Naive thymus-derived CD4-positive, alpha-beta T cell (primary cell): ENCODE measurements at regions of chr17 and their contacts with region 1.

Region 1: DNA sequence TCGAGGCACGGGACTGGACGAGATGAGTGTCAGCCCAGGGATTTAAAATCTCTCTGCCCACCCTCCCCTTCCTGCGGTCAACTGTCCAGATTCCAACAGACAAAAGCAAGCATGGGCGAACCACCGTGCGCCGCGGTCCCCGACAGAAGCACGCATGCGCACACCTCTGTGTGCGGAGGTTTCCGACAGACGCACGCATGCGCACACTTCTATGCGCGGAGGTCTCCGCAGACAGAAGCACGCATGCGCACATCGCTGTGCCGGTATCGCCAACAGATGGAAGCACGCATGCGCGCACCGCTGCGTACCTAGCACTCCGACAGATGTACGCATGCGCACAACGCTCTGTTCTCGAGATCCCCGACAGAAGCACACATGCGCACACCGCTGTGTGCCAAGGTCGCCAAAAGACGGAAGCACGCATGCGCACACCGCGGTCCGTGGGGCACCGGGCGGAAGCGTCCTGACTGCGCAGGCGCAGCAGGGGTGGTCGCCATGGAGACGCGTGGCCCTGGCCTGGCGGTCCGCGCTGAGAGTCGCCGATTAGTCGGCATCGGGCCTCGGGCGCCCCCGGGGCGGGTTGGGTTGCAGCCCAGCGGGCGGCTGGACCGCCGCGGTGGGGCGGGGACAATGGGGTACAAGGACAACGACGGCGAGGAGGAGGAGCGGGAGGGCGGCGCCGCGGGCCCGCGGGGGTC is 57.4 kb upstream of the RPH3AL start:
- DNase-seq: peak; percentile 97 to 100 (median 99)
- ATAC-seq: peak; percentile 62
- H3K4me3 ChIP-seq: peak overlapping the region; percentile 77
- H3K4me3 Mint-ChIP-seq: peak overlapping the region; percentile 91 to 97 (median 94)
- H3K27ac ChIP-seq: peak overlapping the region; percentile 88
- H3K27ac Mint-ChIP-seq: peak overlapping the region; percentile 90 to 99 (median 98)
- H3K4me1 ChIP-seq: peaks cover 36 to 37% of the 10 kb centered on the region in 2 donors
- H3K4me1 Mint-ChIP-seq: peaks cover 53 to 76% (median 72%) of the 10 kb centered on the region in 7 donors
- H3K27me3 ChIP-seq: no peaks in the 10 kb centered on the region
- H3K27me3 Mint-ChIP-seq: peaks cover 0 to 7% (median 0%) of the 10 kb centered on the region in 5 donors

Region 2: DNA sequence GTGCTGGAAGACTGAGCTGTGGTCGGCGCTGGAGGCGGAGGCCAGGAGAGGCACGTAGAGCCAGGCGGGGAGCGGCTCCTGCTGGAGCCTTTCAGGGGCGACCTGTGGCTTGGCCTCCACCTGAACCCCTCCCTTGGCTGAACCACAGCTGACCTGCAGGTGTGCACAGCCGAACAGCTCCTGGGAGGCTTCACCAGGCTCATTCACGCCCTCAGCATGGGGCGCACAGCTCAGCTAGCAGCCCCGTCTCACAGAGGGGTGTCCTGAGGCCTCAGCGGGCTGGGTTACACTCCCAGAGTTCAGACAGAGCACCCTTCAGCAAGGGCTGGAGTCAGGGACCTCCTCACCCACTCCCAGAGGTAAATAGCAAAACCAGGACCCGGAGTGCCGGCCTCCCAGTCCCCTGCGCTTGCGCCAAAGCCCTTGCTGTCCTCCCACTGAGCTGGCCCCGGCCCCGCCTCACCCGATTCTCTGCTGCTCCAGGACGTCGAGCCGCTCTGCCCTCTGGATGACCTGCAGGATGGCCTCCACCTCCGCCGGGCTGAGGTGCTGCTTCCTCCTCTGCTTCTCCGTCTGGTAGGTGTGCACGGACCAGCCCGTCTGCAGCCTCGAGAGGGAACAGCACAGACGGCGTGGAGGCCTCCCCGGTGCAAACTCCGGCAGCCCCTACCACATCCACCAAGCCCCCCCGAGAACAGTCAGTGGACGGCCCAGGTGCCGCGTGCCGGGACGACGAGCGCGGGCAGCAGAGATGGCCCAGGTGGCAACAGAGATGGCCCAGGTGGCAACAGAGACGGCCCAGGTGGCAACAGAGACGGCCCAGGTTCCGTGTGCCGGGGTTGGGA is 89.0 kb before region 1 on chr17:
- CTCF ChIA-PET with region 1: no interaction called
- POLR2A ChIA-PET with region 1: no interaction called
- intact Hi-C with region 1: no loop called
- DNase-seq: no peak
- ATAC-seq: no peak
- H3K4me3 ChIP-seq: no peak overlapping the region
- H3K4me3 Mint-ChIP-seq: no peak overlapping the region
- H3K27ac ChIP-seq: no peak overlapping the region
- H3K27ac Mint-ChIP-seq: no peak overlapping the region
- H3K4me1 ChIP-seq: no peaks in the 10 kb centered on the region
- H3K4me1 Mint-ChIP-seq: peaks cover 0 to 6% (median 0%) of the 10 kb centered on the region in 7 donors
- H3K27me3 ChIP-seq: no peaks in the 10 kb centered on the region
- H3K27me3 Mint-ChIP-seq: no peaks in the 10 kb centered on the region

Region 3: DNA sequence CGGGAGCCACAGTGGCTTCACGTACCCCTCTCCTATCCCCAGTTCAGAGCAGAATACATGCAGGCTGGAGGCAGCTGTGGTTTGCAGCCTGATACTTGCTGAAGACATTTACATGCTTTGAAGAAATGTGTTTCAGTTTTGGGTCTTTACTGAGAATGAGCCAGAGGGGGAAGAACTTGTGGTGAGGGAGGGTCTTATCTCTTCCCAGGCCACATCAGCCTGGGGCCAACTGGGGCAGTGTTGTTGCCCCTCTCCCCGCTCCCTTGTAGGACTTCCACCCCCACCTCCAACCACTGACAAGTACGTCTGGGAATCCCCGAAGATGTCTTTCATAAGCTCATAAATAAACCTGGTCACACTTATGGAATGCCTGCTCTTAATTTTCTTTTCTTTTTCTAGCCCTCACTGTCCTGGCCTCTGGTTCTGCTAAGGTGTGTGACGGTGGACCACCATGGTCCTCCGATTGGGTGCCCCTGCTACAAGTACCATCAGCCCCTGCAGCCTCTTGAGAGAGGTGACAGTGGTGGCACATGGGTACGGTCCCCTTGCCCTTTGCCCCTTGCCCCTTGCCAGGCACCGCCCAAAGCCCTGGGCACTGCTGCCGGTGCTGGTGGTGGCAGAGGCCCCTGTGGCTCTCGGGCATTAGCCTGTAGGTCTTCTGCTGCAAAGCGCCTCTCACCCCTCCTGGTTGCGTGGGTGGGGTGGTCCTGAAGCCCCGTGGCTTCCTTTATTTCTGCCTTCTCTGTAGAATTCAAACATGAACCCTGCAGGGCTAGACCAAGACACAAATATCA is 87.4 kb after region 1 on chr17:
- CTCF ChIA-PET with region 1: interaction called, 18 read pairs
- POLR2A ChIA-PET with region 1: interaction called, 18 read pairs
- intact Hi-C with region 1: loop called in 1 of 2 experiments (anchors 1 kb)
- DNase-seq: peak in 3 of 9 donors; percentile 24 to 42 (median 27)
- ATAC-seq: peak; percentile 12
- H3K4me3 ChIP-seq: no peak overlapping the region
- H3K4me3 Mint-ChIP-seq: peak overlapping the region; percentile 13 to 85 (median 72)
- H3K27ac ChIP-seq: peak overlapping the region; percentile 25
- H3K27ac Mint-ChIP-seq: peak overlapping the region; percentile 67 to 94 (median 82)
- H3K4me1 ChIP-seq: peaks cover 0 to 40% of the 10 kb centered on the region in 2 donors
- H3K4me1 Mint-ChIP-seq: peaks cover 23 to 63% (median 46%) of the 10 kb centered on the region in 7 donors
- H3K27me3 ChIP-seq: no peaks in the 10 kb centered on the region
- H3K27me3 Mint-ChIP-seq: peaks cover 0 to 5% (median 0%) of the 10 kb centered on the region in 5 donors

Region 4: GRCh38 chr17:588519-588918 is 178.5 kb after region 1 on chr17:
- CTCF ChIA-PET with region 1: interaction called, 6 read pairs
- POLR2A ChIA-PET with region 1: no interaction called
- intact Hi-C with region 1: loop called in 1 of 2 experiments (anchors 5 kb)
- DNase-seq: no peak
- ATAC-seq: no peak
- H3K4me3 ChIP-seq: no peak overlapping the region
- H3K4me3 Mint-ChIP-seq: no peak overlapping the region
- H3K27ac ChIP-seq: no peak overlapping the region
- H3K27ac Mint-ChIP-seq: peak overlapping the region in 1 of 9 donors; percentile 21
- H3K4me1 ChIP-seq: no peaks in the 10 kb centered on the region
- H3K4me1 Mint-ChIP-seq: peaks cover 0 to under 1% (median 0%) of the 10 kb centered on the region in 7 donors
- H3K27me3 ChIP-seq: no peaks in the 10 kb centered on the region
- H3K27me3 Mint-ChIP-seq: no peaks in the 10 kb centered on the region

Region 5: DNA sequence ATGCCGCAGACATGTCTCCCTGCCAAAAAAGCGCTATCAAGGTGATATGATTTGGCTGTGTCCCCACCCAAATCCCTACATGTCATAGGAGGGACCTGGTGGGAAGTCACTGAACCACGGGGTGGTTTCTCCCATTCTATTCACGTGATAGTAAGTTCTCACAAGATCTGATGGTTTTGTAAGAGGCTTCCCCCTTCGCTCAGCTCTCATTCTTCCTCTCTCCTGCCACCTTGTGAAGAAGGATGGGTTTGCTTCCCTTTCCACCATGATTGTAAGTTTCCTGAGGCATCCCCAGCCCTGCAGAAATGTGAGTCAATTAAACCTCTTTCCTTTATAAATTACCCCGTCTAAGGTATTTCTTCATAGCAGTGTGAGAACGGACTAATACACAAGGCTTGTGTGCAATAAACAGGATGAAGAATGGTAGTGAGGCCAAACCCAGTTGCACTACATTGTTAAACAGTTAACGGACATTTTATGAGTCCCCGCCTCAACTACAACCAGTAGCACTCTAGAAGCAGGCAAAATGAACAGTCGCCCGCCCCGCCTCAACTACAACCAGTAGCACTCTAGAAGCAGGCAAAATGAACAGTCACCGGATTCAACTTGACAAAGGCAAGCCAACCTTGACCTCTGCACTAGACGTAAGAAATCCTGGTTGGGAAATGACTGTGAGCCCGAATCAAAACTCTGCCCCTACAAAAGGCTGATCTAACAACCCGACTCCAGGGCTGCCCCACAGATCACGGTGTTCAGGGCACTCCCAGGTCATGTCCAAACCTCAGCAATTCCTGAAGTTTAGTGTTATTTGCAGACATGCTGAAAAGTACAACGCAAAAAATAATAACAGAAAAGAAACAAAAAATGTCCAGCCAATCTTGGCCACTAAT is 278.3 kb after region 1 on chr17:
- CTCF ChIA-PET with region 1: interaction called, 15 read pairs
- POLR2A ChIA-PET with region 1: interaction called, 3 read pairs
- intact Hi-C with region 1: loop called (anchors 1 kb)
- DNase-seq: peak in 4 of 9 donors; percentile 6 to 27 (median 20)
- ATAC-seq: no peak
- H3K4me3 ChIP-seq: no peak overlapping the region
- H3K4me3 Mint-ChIP-seq: no peak overlapping the region
- H3K27ac ChIP-seq: no peak overlapping the region
- H3K27ac Mint-ChIP-seq: peak overlapping the region in 2 of 9 donors; percentile 24 to 34
- H3K4me1 ChIP-seq: peaks cover 0 to 2% of the 10 kb centered on the region in 2 donors
- H3K4me1 Mint-ChIP-seq: peaks cover 6 to 13% (median 12%) of the 10 kb centered on the region in 7 donors
- H3K27me3 ChIP-seq: no peaks in the 10 kb centered on the region
- H3K27me3 Mint-ChIP-seq: no peaks in the 10 kb centered on the region

Region 6: DNA sequence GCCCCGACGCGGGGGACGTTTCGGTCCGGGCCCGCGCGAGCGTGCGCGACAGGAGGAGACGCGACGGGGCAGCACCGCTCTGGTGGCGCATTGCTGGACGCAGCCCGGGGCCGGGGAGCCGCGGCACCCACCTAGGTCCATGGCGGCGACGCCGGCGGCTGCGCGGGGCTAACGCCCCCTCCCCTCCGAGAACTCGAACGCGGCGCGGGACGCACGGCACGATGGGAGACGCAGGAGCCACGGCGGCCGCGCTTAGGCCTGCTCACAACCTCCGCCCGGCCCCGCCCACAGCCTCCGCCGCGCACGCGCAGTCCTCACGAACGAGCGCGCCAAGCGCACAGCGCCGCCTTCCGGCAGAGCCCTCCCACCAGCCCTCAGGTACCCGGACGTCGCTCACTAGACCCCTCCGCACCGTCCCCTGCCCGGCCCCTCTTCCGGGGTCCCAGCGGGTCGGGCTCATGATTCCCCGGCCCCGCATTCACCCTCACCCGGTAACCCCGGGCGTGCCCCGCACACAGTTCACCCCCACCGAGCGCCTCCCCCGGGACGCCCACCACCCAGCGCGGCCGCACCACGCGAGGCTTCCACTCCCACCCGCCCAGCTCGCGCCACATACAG is 342.1 kb after region 1 on chr17 and contains the start of gene GEMIN4:
- CTCF ChIA-PET with region 1: interaction called, 5 read pairs
- POLR2A ChIA-PET with region 1: no interaction called
- intact Hi-C with region 1: loop called (anchors 1 kb)
- DNase-seq: peak; percentile 92 to 100 (median 98)
- ATAC-seq: peak; percentile 96
- H3K4me3 ChIP-seq: peak within 1 kb of the TSS; percentile 80
- H3K4me3 Mint-ChIP-seq: peak within 1 kb of the TSS; percentile 90 to 97 (median 96)
- H3K27ac ChIP-seq: peak within 1 kb of the TSS; percentile 81
- H3K27ac Mint-ChIP-seq: peak within 1 kb of the TSS; percentile 88 to 98 (median 96)
- H3K4me1 ChIP-seq: peaks cover 15 to 22% of the 10 kb centered on the region in 2 donors
- H3K4me1 Mint-ChIP-seq: peaks cover 32 to 43% (median 40%) of the 10 kb centered on the region in 7 donors
- H3K27me3 ChIP-seq: no peaks in the 10 kb centered on the region
- H3K27me3 Mint-ChIP-seq: no peaks in the 10 kb centered on the region
- total RNA-seq, gene GEMIN4: 15.5 to 35.0 (median 28.9) TPM

Region 7: GRCh38 chr17:879549-880442 is 469.8 kb after region 1 on chr17:
- CTCF ChIA-PET with region 1: no interaction called
- POLR2A ChIA-PET with region 1: no interaction called
- intact Hi-C with region 1: no loop called
- DNase-seq: peak; percentile 37 to 71 (median 64)
- ATAC-seq: peak; percentile 77
- H3K4me3 ChIP-seq: no peak overlapping the region
- H3K4me3 Mint-ChIP-seq: peak overlapping the region in 1 of 10 donors; percentile 39
- H3K27ac ChIP-seq: no peak overlapping the region
- H3K27ac Mint-ChIP-seq: no peak overlapping the region
- H3K4me1 ChIP-seq: peaks cover 0 to 3% of the 10 kb centered on the region in 2 donors
- H3K4me1 Mint-ChIP-seq: peaks cover 2 to 12% (median 11%) of the 10 kb centered on the region in 7 donors
- H3K27me3 ChIP-seq: no peaks in the 10 kb centered on the region
- H3K27me3 Mint-ChIP-seq: peaks cover 5 to 32% (median 22%) of the 10 kb centered on the region in 5 donors

Region 8: DNA sequence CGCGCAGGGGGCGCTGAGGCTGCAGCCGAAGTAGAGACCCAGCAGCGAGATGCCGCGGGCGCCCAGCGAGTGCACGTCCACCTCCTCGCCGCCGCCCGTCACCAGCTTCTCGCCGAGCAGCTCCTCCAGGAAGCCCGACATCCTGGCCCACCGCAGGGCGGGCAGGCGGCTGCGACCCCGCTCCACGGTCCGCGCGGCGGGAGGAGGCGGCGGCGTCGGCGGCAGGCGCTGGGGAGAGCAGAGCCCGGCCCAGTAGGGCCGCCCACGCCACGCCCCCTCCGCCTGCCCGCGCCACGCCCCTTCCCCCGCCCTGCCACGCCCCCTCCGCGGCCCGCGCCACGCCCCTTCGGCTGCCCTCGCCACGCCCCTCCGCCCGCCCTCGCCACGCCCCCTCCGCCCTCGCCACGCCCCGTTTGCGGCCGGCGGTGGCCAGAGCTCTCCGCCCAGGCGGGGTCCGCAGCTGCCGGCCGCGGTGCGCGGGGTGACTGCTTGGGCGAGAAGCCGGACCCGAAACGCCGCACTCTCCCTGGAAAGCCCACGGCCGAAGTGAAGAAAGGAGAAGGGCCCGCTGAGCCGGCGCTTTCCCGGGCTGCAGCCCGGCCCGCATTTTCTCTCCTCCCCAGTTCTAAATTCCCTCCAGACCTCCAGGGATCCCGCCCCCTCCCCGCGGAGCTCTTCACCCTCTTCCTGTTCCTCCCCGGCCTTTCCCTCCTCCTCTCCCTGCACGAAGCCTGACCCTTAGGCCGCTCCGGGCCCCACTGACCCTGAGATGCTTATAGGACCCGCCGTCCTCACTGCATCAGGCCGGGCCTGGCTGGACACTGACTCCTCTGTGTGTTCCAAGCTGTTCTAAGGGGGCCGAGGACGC is 569.8 kb after region 1 on chr17 and contains the start of gene NXN:
- CTCF ChIA-PET with region 1: no interaction called
- POLR2A ChIA-PET with region 1: no interaction called
- intact Hi-C with region 1: loop called (anchors 1 to 5 kb)
- DNase-seq: peak; percentile 72 to 96 (median 83)
- ATAC-seq: peak; percentile 99
- H3K4me3 ChIP-seq: peak within 1 kb of the TSS; percentile 50
- H3K4me3 Mint-ChIP-seq: peak within 1 kb of the TSS; percentile 64 to 88 (median 80)
- H3K27ac ChIP-seq: peak within 1 kb of the TSS; percentile 56
- H3K27ac Mint-ChIP-seq: peak within 1 kb of the TSS in 7 of 9 donors; percentile 72 to 88 (median 79)
- H3K4me1 ChIP-seq: peaks cover 8 to 19% of the 10 kb centered on the region in 2 donors
- H3K4me1 Mint-ChIP-seq: peaks cover 13 to 20% (median 15%) of the 10 kb centered on the region in 7 donors
- H3K27me3 ChIP-seq: peaks cover 6 to 11% of the 10 kb centered on the region in 2 donors
- H3K27me3 Mint-ChIP-seq: peaks cover 27 to 42% (median 34%) of the 10 kb centered on the region in 5 donors
- total RNA-seq, gene NXN: 0.10 to 0.84 (median 0.36) TPM in 4 of 5 experiments, not detected in the other